Pancreas (tissue), 10 donors: ENCODE measurements at regions of chr7 and their contacts with region 1.

Region 1: DNA sequence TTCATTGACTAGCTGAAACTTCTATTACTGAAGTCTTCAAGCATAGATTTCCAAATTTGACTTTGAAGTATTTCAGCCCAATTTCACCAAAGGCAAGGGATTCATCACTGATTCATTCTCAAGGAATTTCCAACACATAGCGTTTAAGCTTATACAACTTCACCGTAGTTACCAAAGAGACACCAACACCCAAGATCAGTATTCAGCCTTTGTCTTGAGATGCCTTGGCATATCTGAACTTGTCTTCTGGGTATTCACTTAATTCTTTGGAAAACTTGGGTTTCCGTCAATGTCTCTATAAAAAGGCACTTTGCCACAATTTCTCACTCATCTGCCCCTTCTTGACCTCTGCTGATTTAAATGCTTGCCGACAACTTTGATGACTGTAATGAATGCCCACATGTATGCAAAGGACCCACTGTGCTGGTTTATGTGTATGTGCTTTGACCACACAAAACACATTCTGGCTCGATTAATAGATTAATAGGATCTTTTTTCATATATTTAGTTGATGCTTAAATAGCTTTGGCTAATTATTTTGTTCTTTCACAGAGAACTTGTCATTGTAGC is 49.6 kb downstream of the TES start:
- DNase-seq: no peak
- ATAC-seq: no peak
- H3K4me3 ChIP-seq: no peak overlapping the region
- H3K27ac ChIP-seq: no peak overlapping the region
- H3K4me1 ChIP-seq: peaks cover 0 to 4% (median 0%) of the 10 kb centered on the region in 3 donors
- H3K27me3 ChIP-seq: no peaks in the 10 kb centered on the region
- CTCF ChIP-seq: no peak

Region 2: DNA sequence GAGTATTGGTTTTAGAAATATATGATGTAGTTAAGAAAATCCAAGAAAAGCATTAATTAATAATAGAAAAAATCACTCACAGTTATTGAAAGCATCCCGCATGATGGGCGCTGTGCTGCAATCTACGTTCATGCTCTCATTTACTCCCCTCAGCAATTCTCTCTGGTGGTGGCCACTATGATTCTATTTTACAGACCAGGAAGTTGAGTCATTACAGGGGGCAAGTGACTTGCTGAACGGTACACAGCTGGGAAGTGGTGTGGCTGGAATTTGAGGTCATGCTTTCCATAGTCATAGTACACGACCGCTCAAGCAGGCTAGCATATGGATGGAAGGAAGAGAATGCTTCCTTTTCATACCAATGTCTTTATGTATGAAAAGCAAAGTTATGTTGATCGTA is 67.8 kb after region 1 on chr7:
- intact Hi-C with region 1: no loop called
- DNase-seq: no peak
- ATAC-seq: no peak
- H3K4me3 ChIP-seq: no peak overlapping the region
- H3K27ac ChIP-seq: no peak overlapping the region
- H3K4me1 ChIP-seq: no peaks in the 10 kb centered on the region
- H3K27me3 ChIP-seq: no peaks in the 10 kb centered on the region
- CTCF ChIP-seq: no peak

Region 3: GRCh38 chr7:116588641-116589594 is 329.0 kb after region 1 on chr7:
- intact Hi-C with region 1: loop called in 2 of 3 experiments (anchors 5 to 10 kb)
- DNase-seq: no peak
- ATAC-seq: peak in 3 of 4 donors; percentile 59 to 64 (median 64)
- H3K4me3 ChIP-seq: no peak overlapping the region
- H3K27ac ChIP-seq: no peak overlapping the region
- H3K4me1 ChIP-seq: peaks cover 0 to 30% (median 21%) of the 10 kb centered on the region in 3 donors
- H3K27me3 ChIP-seq: no peaks in the 10 kb centered on the region
- CTCF ChIP-seq: peak; percentile 25 to 68 (median 46)